ENCODE measurements at regions of chr2 and their contacts with region 1.

Region 1: DNA sequence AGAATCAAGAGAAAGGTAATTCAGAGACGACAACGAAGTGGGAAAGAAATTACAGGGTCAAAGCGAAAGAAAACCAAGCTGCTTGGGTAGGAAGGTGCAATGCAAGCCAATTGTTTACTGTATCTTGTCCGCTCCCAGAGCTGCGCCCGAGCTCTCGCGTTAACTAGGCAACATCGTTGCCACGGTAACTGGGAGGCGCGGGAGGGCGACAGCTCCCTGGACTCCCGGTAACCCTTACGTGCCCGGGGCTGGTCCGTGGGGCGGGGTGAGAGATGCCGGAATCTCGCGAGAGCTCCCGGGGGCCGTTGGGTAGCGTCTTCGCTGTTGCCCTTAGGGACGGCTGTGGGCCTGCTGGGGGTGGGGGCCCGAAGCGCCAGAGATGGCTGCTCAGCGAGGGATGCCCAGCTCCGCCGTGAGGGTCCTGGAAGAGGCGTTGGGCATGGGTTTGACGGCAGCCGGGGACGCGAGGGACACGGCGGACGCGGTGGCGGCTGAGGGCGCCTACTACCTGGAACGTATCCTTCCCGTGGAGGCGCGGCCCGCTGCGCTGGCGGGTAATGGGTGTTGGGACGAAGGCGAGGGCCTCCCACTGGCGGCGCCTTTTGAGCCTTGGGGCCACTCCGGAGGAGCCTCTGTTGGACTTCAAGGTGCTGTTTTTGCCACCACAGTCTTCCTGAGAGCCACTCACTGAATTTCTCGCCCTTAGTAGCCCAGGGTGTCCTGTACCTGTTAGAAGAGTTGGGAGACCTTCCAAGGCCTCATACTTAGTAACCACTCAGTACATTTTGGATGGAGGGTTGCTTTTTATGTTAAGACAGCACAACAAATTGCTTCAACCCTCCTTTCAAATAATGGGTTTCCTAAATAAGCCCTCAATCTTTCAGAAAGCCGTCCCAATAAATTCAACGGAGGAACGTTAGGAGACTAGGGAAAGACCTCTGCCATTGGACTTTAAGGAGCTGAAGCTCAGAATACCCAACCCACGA is at the start of gene SPAG16:
- DNase-seq: peak; percentile 95
- ATAC-seq: peak; percentile 95
- H3K4me3 ChIP-seq: peak within 1 kb of the TSS; percentile 69 to 95 (median 77)
- H3K4me3 Mint-ChIP-seq: peak within 1 kb of the TSS; percentile 100
- H3K27ac ChIP-seq: peak within 1 kb of the TSS; percentile 41 to 77
- H3K27ac Mint-ChIP-seq: peak within 1 kb of the TSS; percentile 94
- H3K4me1 ChIP-seq: peaks cover 11 to 13% of the 10 kb centered on the region in 2 donors
- H3K4me1 Mint-ChIP-seq: peaks cover 32% of the 10 kb centered on the region
- H3K27me3 ChIP-seq: no peaks in the 10 kb centered on the region
- H3K27me3 Mint-ChIP-seq: no peaks in the 10 kb centered on the region
- CTCF ChIP-seq: no peak
- total RNA-seq, gene SPAG16: 8.6 and 9.5 TPM in 2 replicates

Region 2: DNA sequence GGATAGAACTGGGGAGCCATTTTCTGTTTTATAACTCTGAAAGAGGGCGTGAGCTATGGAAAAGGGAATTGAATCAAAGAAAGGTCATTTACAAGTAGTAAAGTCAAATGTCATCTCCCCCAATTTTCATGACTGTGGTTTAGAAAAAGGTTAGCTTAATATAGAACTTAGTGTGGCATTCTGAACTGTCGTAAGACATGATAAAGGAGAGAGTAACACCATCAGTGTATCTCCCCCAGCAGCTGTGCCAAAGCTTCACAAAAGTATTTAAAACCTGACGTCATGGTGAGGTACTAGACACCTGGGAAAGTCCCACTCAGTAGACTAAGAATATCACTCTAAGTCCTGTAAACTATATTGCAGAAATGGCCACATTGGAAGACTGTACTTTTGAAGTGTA is 127.2 kb before region 1 on chr2:
- CTCF ChIA-PET with region 1: interaction called, 3 read pairs
- POLR2A ChIA-PET with region 1: no interaction called
- intact Hi-C with region 1: loop called (anchors 1 kb)
- DNase-seq: peak; percentile 84
- ATAC-seq: peak; percentile 89
- H3K4me3 ChIP-seq: no peak overlapping the region
- H3K4me3 Mint-ChIP-seq: peak overlapping the region; percentile 23
- H3K27ac ChIP-seq: peak overlapping the region; percentile 53 to 79
- H3K27ac Mint-ChIP-seq: peak overlapping the region; percentile 66
- H3K4me1 ChIP-seq: peaks cover 11 to 27% of the 10 kb centered on the region in 2 donors
- H3K4me1 Mint-ChIP-seq: peaks cover 44% of the 10 kb centered on the region
- H3K27me3 ChIP-seq: no peaks in the 10 kb centered on the region
- H3K27me3 Mint-ChIP-seq: no peaks in the 10 kb centered on the region
- CTCF ChIP-seq: no peak

Region 3: GRCh38 chr2:214809751-214810564 is 1525.6 kb after region 1 on chr2:
- CTCF ChIA-PET with region 1: no interaction called
- POLR2A ChIA-PET with region 1: no interaction called
- intact Hi-C with region 1: loop called (anchors 1 kb)
- DNase-seq: peak; percentile 99
- ATAC-seq: peak; percentile 88
- H3K4me3 ChIP-seq: peak overlapping the region; percentile 53 to 96 (median 94)
- H3K4me3 Mint-ChIP-seq: peak overlapping the region; percentile 98
- H3K27ac ChIP-seq: peak overlapping the region; percentile 75 to 76
- H3K27ac Mint-ChIP-seq: peak overlapping the region; percentile 98
- H3K4me1 ChIP-seq: peaks cover 13 to 19% of the 10 kb centered on the region in 2 donors
- H3K4me1 Mint-ChIP-seq: peaks cover 40% of the 10 kb centered on the region
- H3K27me3 ChIP-seq: no peaks in the 10 kb centered on the region
- H3K27me3 Mint-ChIP-seq: no peaks in the 10 kb centered on the region
- CTCF ChIP-seq: no peak